ENCODE measurements at regions of chr11 and their contacts with region 1.

Region 1: DNA sequence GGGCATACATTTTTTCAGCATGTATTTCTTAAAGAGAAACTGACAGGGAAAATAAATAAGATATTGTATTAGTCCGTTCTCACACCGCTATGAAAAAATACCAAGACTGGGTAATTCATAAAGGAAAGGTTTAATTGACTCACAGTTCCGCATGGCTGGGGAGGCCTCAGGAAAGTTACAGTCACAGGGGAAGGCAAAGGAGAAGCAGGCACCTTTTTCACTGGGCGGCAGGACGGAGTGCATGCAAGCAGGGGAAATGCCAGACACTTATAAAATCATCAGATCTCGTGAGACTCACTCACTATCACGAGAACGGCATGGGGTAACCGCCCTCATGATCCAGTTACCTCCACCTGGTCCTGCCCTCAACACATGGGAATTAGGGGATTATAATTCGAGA is 44.2 kb downstream of the PPFIA1 start:
- DNase-seq: peak; percentile 83 to 94 (median 88)
- H3K4me3 ChIP-seq: peak overlapping the region in 2 of 3 experiments; percentile 3 to 76
- H3K4me3 Mint-ChIP-seq: peak overlapping the region; percentile 38 to 77
- H3K27ac ChIP-seq: peak overlapping the region; percentile 80 to 98
- H3K27ac Mint-ChIP-seq: peak overlapping the region; percentile 95 to 99 (median 98)
- H3K4me1 ChIP-seq: peaks cover 56 to 73% of the 10 kb centered on the region in 2 donors
- H3K4me1 Mint-ChIP-seq: peaks cover 41% of the 10 kb centered on the region
- H3K27me3 ChIP-seq: no peaks in the 10 kb centered on the region
- H3K27me3 Mint-ChIP-seq: peaks cover 0 to 4% (median 2%) of the 10 kb centered on the region in 3 donors
- CTCF ChIP-seq: no peak

Region 2: DNA sequence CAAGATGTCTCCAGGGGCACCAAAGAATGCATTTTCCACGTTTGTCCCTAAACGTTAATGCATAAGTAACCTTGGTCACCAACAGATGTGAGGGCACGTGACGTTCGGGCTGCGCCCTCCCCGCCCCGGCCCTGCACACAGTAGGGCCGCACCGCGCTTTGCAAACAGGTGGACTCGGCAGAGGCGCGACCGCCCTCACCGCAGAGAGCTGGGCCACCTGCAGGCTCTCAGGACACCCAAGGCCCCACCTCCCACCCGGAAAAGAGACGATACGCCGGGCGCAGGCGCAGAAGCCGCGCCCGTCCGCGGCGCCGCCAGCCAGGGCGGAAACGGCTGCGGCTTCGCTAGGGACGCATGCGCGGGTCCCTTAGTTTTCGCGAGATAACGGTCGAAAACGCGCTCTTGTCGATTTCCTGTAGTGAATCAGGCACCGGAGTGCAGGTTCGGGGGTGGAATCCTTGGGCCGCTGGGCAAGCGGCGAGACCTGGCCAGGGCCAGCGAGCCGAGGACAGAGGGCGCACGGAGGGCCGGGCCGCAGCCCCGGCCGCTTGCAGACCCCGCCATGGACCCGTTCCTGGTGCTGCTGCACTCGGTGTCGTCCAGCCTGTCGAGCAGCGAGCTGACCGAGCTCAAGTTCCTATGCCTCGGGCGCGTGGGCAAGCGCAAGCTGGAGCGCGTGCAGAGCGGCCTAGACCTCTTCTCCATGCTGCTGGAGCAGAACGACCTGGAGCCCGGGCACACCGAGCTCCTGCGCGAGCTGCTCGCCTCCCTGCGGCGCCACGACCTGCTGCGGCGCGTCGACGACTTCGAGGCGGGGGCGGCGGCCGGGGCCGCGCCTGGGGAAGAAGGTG is 111.6 kb before region 1 on chr11 and contains the start of gene FADD:
- intact Hi-C with region 1: loop called in 1 of 2 experiments (anchors 5 kb)
- DNase-seq: peak; percentile 92 to 97 (median 92)
- H3K4me3 ChIP-seq: peak within 1 kb of the TSS; percentile 81 to 94 (median 83)
- H3K4me3 Mint-ChIP-seq: peak within 1 kb of the TSS; percentile 89 to 96
- H3K27ac ChIP-seq: peak within 1 kb of the TSS; percentile 86 to 95
- H3K27ac Mint-ChIP-seq: peak within 1 kb of the TSS; percentile 94 to 99 (median 96)
- H3K4me1 ChIP-seq: peaks cover 26 to 36% of the 10 kb centered on the region in 2 donors
- H3K4me1 Mint-ChIP-seq: peaks cover 40% of the 10 kb centered on the region
- H3K27me3 ChIP-seq: peaks cover 0 to 2% of the 10 kb centered on the region in 2 donors
- H3K27me3 Mint-ChIP-seq: peaks cover 11 to 21% (median 11%) of the 10 kb centered on the region in 3 donors
- CTCF ChIP-seq: no peak
- polyA plus RNA-seq, gene FADD: 5.4 to 9.5 (median 7.7) TPM

Region 3: GRCh38 chr11:70270104-70270876 is 44.4 kb before region 1 on chr11 and contains the start of gene PPFIA1:
- intact Hi-C with region 1: loop called (anchors 5 kb)
- DNase-seq: peak; percentile 92 to 93 (median 92)
- H3K4me3 ChIP-seq: peak within 1 kb of the TSS; percentile 86 to 97 (median 88)
- H3K4me3 Mint-ChIP-seq: peak within 1 kb of the TSS; percentile 92 to 95
- H3K27ac ChIP-seq: peak within 1 kb of the TSS; percentile 44 to 81
- H3K27ac Mint-ChIP-seq: peak within 1 kb of the TSS; percentile 64 to 94 (median 85)
- H3K4me1 ChIP-seq: peaks cover 20 to 28% of the 10 kb centered on the region in 2 donors
- H3K4me1 Mint-ChIP-seq: peaks cover 24% of the 10 kb centered on the region
- H3K27me3 ChIP-seq: peaks cover 4 to 11% of the 10 kb centered on the region in 2 donors
- H3K27me3 Mint-ChIP-seq: peaks cover 27 to 39% (median 36%) of the 10 kb centered on the region in 3 donors
- CTCF ChIP-seq: no peak
- polyA plus RNA-seq, gene PPFIA1: 7.5 to 65.7 (median 15.5) TPM

Region 4: DNA sequence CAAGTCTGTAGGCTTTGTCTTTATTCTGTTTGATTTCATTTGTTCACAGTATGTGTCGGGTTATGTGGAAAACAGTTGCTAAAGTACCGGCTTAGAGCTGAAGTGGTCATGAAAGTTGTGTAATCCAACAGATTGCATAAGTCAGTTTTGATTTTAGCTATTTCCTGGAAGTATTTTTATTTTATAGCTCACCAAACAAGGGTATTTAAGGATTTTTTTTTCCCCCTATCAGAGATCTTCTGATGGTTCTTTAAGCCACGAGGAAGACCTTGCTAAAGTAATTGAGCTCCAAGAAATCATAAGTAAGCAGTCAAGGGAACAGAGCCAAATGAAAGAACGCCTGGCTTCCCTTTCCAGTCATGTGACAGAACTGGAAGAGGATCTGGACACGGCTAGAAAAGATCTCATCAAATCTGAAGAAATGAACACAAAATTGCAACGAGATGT is 11.7 kb after region 1 on chr11:
- intact Hi-C with region 1: loop called (anchors 1 to 2 kb)
- DNase-seq: peak; percentile 80 to 90 (median 88)
- H3K4me3 ChIP-seq: peak overlapping the region; percentile 32 to 67 (median 57)
- H3K4me3 Mint-ChIP-seq: peak overlapping the region; percentile 65 to 88
- H3K27ac ChIP-seq: peak overlapping the region; percentile 89
- H3K27ac Mint-ChIP-seq: peak overlapping the region; percentile 93 to 97 (median 97)
- H3K4me1 ChIP-seq: peaks cover 62% of the 10 kb centered on the region in 2 donors
- H3K4me1 Mint-ChIP-seq: peaks cover 62% of the 10 kb centered on the region
- H3K27me3 ChIP-seq: no peaks in the 10 kb centered on the region
- H3K27me3 Mint-ChIP-seq: peaks cover 0 to 4% (median 0%) of the 10 kb centered on the region in 3 donors
- CTCF ChIP-seq: no peak

Measured in CD14-positive monocyte (primary cell).